ENCODE measurements at regions of chr14 and their contacts with region 1.

Region 1: GRCh38 chr14:67599698-67600561 is at the start of gene PIGH:
- DNase-seq: peak; percentile 91 to 94 (median 92)
- H3K4me3 ChIP-seq: peak within 1 kb of the TSS; percentile 47 to 82
- H3K4me3 Mint-ChIP-seq: peak within 1 kb of the TSS; percentile 93 to 99 (median 98)
- H3K27ac ChIP-seq: peak within 1 kb of the TSS; percentile 72
- H3K27ac Mint-ChIP-seq: peak within 1 kb of the TSS; percentile 90 to 99 (median 98)
- H3K4me1 ChIP-seq: peaks cover 26% of the 10 kb centered on the region
- H3K4me1 Mint-ChIP-seq: peaks cover 23 to 55% (median 41%) of the 10 kb centered on the region in 4 donors
- H3K27me3 ChIP-seq: no peaks in the 10 kb centered on the region
- H3K27me3 Mint-ChIP-seq: peaks cover 0 to 1% of the 10 kb centered on the region in 2 donors
- total RNA-seq, gene PIGH: 28.0 to 35.8 TPM

Region 2: DNA sequence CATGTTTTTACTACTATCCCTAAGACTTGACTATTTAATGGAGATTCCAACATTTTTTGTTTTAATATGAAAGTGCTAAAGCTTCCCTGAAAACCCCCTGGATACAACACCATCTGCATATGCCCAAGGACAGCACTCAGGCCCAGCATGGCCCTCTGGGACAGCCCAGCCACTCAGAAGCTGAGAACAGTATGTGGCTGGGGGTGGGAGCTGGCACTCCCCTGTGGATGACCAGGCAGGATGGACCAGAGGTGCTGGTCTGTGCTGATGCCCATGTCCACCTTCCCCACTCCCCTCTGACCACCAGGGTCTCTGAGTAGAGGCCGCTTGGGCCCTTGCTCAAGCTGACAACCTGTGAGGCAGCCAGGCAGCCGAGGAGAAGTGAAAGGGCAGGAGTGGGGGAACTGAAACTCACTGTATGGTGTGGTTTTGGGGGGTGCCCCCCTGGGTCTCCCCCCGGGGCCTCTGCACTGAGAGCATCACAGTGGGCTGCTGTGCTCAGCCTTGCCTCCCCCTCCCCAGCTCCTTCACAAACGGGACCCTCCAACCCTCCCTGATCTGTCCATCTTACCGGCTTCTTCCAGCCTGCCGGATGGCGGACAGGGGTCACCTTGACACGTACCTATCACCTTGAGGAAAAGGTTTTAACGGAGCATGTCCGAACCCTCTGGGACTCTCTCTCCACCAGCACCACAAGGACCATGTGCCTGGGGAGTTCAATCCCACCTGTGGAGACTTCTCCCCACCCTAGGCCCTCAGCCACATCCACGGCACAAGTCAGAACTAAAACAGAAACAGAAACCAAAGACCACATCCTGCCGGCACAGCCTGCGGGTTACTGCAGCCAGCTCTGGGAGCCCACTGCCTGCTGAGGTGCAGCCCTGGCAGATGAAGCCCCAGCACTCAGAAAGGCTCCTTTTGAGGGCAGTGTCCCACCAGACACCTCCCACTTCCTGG is 111.7 kb before region 1 on chr14 and contains the start of gene TMEM229B:
- CTCF ChIA-PET with region 1: interaction called, 6 read pairs
- POLR2A ChIA-PET with region 1: interaction called, 16 read pairs
- intact Hi-C with region 1: loop called (anchors 1 kb)
- DNase-seq: peak; percentile 74 to 84 (median 81)
- H3K4me3 ChIP-seq: peak within 1 kb of the TSS; percentile 74 to 93
- H3K4me3 Mint-ChIP-seq: peak within 1 kb of the TSS; percentile 91 to 100 (median 96)
- H3K27ac ChIP-seq: peak within 1 kb of the TSS; percentile 93
- H3K27ac Mint-ChIP-seq: peak within 1 kb of the TSS; percentile 95 to 100 (median 99)
- H3K4me1 ChIP-seq: peaks cover 52% of the 10 kb centered on the region
- H3K4me1 Mint-ChIP-seq: peaks cover 39 to 72% (median 57%) of the 10 kb centered on the region in 4 donors
- H3K27me3 ChIP-seq: no peaks in the 10 kb centered on the region
- H3K27me3 Mint-ChIP-seq: no peaks in the 10 kb centered on the region
- total RNA-seq, gene TMEM229B: 34.9 to 35.8 TPM

Region 3: GRCh38 chr14:67502881-67503699 is 96.8 kb before region 1 on chr14:
- CTCF ChIA-PET with region 1: no interaction called
- POLR2A ChIA-PET with region 1: no interaction called
- intact Hi-C with region 1: no loop called
- DNase-seq: no peak
- H3K4me3 ChIP-seq: no peak overlapping the region
- H3K4me3 Mint-ChIP-seq: no peak overlapping the region
- H3K27ac ChIP-seq: no peak overlapping the region
- H3K27ac Mint-ChIP-seq: peak overlapping the region in 2 of 7 donors; percentile 66 to 78
- H3K4me1 ChIP-seq: no peaks in the 10 kb centered on the region
- H3K4me1 Mint-ChIP-seq: peaks cover 0 to 4% (median 1%) of the 10 kb centered on the region in 4 donors
- H3K27me3 ChIP-seq: no peaks in the 10 kb centered on the region
- H3K27me3 Mint-ChIP-seq: no peaks in the 10 kb centered on the region

Region 4: GRCh38 chr14:67589204-67589770 is 10.6 kb before region 1 on chr14:
- CTCF ChIA-PET with region 1: interaction called, 22 read pairs
- POLR2A ChIA-PET with region 1: interaction called, 5 read pairs
- intact Hi-C with region 1: no loop called
- DNase-seq: no peak
- H3K4me3 ChIP-seq: no peak overlapping the region
- H3K4me3 Mint-ChIP-seq: no peak overlapping the region
- H3K27ac ChIP-seq: no peak overlapping the region
- H3K27ac Mint-ChIP-seq: peak overlapping the region in 1 of 7 donors; percentile 59
- H3K4me1 ChIP-seq: no peaks in the 10 kb centered on the region
- H3K4me1 Mint-ChIP-seq: peaks cover 0 to 5% (median under 1%) of the 10 kb centered on the region in 4 donors
- H3K27me3 ChIP-seq: no peaks in the 10 kb centered on the region
- H3K27me3 Mint-ChIP-seq: no peaks in the 10 kb centered on the region

Region 5: DNA sequence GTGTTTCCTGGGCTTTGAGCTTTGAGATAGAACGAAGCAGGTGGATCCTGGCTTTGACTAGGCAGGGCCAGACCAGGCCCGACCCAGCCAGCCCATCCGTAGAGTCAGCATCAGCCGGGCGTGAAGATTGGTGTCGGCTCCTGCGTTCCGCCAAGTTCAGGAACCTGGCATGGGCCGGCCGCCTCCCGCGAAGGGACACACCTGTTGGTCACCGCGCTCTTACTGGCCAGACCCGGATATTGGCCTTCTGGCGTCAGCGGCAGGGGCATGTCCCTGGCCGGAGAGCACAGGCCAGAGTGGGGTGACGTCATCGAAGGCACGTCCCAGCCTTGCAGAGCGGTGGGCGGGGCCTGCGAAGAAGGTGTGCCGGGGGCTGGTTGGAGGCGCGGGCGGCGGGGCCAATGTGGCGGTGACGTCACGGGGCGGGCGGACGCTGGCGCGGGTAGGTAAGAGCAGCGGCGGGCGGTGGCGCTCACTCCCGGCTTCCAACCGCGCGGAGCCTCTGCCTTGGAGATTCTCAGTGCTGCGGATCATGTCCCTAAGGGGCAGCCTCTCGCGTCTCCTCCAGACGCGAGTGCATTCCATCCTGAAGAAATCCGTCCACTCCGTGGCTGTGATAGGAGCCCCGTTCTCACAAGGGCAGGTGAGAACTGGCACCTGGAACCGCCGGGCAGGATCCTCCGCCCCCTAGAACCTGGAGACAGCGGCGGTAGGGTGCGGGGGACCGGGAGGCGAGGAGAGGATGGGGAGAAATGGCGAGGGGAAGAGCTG is 19.7 kb after region 1 on chr14 and contains the start of gene ARG2:
- CTCF ChIA-PET with region 1: interaction called, 21 read pairs
- POLR2A ChIA-PET with region 1: interaction called, 12 read pairs
- intact Hi-C with region 1: loop called (anchors 1 kb)
- DNase-seq: peak; percentile 95 to 96 (median 95)
- H3K4me3 ChIP-seq: peak within 1 kb of the TSS; percentile 52 to 54
- H3K4me3 Mint-ChIP-seq: peak within 1 kb of the TSS; percentile 87 to 92 (median 89)
- H3K27ac ChIP-seq: peak within 1 kb of the TSS; percentile 75
- H3K27ac Mint-ChIP-seq: peak within 1 kb of the TSS; percentile 88 to 98 (median 97)
- H3K4me1 ChIP-seq: peaks cover 15% of the 10 kb centered on the region
- H3K4me1 Mint-ChIP-seq: peaks cover 7 to 25% (median 21%) of the 10 kb centered on the region in 4 donors
- H3K27me3 ChIP-seq: peaks cover 4% of the 10 kb centered on the region
- H3K27me3 Mint-ChIP-seq: peaks cover 2 to 7% of the 10 kb centered on the region in 2 donors
- total RNA-seq, gene ARG2: 0.55 TPM in 1 of 2 experiments, not detected in the other

Region 6: DNA sequence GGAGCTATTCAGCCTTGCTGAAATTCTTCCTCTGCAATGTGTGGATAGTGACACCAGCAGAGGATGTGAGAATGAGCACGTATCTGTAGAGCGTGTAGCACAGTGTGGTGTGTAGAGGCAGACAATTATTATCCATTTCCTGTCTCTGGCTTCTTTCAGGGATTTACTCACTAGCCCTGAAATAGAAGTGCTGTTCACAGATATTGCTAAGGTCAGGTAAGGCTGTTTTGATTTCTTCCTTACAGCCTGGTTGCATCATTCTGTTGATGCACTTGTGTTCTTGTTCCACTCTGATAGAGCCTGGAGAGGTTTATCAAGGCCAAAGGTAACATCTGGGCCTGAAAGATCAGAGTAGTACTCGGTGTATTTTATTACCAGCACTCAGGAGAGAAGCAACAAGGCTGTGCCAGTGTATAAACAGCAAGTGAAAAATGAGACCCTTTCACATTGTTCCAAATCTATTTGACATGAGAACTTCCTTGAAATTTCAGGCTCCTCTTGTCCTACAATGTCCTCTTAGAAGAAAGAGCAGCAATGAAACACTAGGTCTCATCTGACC is 36.5 kb after region 1 on chr14:
- CTCF ChIA-PET with region 1: no interaction called
- POLR2A ChIA-PET with region 1: no interaction called
- intact Hi-C with region 1: no loop called
- DNase-seq: no peak
- H3K4me3 ChIP-seq: no peak overlapping the region
- H3K4me3 Mint-ChIP-seq: no peak overlapping the region
- H3K27ac ChIP-seq: no peak overlapping the region
- H3K27ac Mint-ChIP-seq: no peak overlapping the region
- H3K4me1 ChIP-seq: no peaks in the 10 kb centered on the region
- H3K4me1 Mint-ChIP-seq: no peaks in the 10 kb centered on the region
- H3K27me3 ChIP-seq: no peaks in the 10 kb centered on the region
- H3K27me3 Mint-ChIP-seq: peaks cover 0 to 1% of the 10 kb centered on the region in 2 donors

Region 7: DNA sequence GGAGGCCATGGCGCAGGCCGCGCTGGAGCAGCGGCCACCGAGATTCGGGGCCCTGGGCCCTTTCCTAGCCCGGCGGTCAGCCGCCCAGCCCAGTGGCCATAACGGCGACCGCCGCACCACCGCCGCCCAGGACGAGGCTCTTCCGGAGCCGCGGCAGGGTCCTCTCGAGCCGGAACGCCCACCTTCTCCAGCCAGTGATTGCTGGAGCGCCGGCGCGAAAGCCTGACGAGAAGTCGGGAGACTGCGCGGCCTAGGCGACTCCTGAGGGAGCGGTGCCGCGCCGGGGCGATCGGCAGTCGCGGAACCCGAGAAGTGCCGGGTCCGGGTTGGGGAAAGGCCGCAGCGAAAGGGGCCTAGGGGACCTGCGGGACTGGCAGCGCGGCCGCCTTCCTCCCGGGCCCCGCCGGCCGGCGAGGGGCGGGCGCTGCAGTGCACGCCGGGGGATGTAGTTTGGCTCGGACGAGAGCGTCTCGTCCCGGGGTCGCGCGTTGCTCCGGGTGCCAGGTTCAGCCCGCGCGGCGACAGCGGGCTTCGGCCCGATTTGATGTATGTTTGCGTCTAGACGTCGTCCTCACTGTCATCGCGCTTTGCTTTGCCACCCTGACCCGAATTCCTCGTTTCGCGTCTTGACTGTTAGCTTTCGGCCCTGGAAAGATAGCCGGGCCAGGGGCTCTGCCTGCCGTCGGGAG is 74.7 kb after region 1 on chr14 and contains the start of gene VTI1B:
- CTCF ChIA-PET with region 1: interaction called, 7 read pairs
- POLR2A ChIA-PET with region 1: interaction called, 19 read pairs
- intact Hi-C with region 1: loop called (anchors 2 kb)
- DNase-seq: peak; percentile 78 to 85 (median 81)
- H3K4me3 ChIP-seq: peak within 1 kb of the TSS; percentile 66 to 96
- H3K4me3 Mint-ChIP-seq: peak within 1 kb of the TSS; percentile 86 to 94 (median 91)
- H3K27ac ChIP-seq: peak within 1 kb of the TSS; percentile 87
- H3K27ac Mint-ChIP-seq: peak within 1 kb of the TSS; percentile 72 to 95 (median 92)
- H3K4me1 ChIP-seq: peaks cover 48% of the 10 kb centered on the region
- H3K4me1 Mint-ChIP-seq: peaks cover 23 to 54% (median 39%) of the 10 kb centered on the region in 4 donors
- H3K27me3 ChIP-seq: no peaks in the 10 kb centered on the region
- H3K27me3 Mint-ChIP-seq: no peaks in the 10 kb centered on the region
- total RNA-seq, gene VTI1B: 71.1 to 72.6 TPM

Region 8: DNA sequence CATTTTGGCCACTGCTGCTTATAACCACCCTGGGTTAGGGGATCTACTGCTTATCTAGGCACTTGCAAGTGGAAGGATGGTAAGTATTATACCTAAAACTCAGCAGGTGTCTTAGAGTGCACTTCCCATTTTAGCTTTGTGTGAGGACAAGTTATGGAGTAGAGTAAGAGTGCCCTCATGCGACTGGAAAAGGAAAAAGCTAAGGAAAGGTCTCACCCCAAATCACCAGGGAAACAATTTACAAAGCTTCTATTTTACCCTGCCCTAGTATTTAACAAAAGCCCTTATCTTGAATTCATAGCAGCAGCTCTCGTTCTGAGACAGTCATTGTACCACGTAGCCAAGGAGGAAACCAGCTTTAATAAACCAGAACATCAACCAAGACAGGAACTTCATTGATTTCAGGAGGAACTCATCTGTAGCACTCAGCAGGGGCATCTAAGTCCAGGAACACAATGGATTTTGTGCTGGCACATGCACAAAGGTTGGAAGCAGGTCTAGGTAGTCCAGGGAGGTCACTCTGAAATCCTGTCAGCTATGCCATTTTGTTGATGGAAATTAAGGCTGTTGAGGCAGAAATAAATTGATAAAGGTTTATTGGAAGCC is 104.7 kb after region 1 on chr14:
- CTCF ChIA-PET with region 1: interaction called, 23 read pairs
- POLR2A ChIA-PET with region 1: interaction called, 8 read pairs
- intact Hi-C with region 1: no loop called
- DNase-seq: peak in 4 of 5 donors; percentile 50 to 57 (median 52)
- H3K4me3 ChIP-seq: no peak overlapping the region
- H3K4me3 Mint-ChIP-seq: no peak overlapping the region
- H3K27ac ChIP-seq: no peak overlapping the region
- H3K27ac Mint-ChIP-seq: no peak overlapping the region
- H3K4me1 ChIP-seq: no peaks in the 10 kb centered on the region
- H3K4me1 Mint-ChIP-seq: no peaks in the 10 kb centered on the region
- H3K27me3 ChIP-seq: no peaks in the 10 kb centered on the region
- H3K27me3 Mint-ChIP-seq: peaks cover 3 to 4% of the 10 kb centered on the region in 2 donors

Measured in CD4-positive, alpha-beta memory T cell (primary cell).